MCF 10A (cell line): ENCODE measurements at regions of chr3 and their contacts with region 1.

Region 1: DNA sequence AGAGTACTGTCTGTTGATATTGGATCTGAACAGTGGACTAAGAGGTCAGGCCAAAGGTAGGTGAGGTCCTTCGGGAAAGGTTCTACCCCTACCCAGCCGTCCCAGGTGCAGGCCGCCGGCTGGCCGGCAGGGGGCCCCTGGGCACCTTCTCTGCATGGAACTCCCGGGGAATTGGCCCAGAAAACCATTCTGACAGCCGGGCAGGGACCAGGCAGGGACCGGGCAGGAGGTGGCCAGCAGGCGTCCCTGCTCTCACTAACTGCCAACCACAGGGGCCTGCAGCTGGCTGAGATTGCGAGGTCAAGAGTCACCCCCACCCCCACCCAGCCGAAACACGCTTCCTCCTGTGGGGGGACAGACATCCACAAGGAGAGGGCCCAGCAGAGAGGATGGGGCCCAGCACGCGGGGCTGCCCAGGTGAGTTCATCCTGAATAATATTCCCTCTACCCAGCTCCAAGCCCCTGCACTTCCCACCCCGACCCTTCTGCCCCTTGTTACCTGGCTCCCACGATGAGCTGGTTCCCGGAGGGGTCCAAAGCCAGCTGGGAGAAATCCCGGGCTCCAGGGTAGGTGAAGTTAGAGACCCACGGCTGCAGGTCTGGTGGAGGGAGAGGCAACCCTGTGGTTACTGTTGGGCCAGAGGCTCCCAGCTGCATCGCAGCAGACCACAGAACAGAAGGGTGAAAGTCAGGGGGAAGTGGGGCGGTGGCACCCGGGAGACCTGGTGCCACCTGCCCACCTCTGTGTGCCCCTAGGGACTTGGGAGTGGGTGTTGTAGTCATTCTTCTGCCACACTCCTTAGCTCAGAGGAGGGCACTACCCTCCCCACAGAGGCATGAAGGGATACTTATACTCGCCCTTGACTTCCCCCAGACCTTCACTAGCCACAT is 84.4 kb downstream of the SEMA5B start:
- DNase-seq: peak; percentile 80
- H3K4me3 Mint-ChIP-seq: no peak overlapping the region
- H3K27ac Mint-ChIP-seq: no peak overlapping the region
- H3K4me1 Mint-ChIP-seq: peaks cover 4% of the 10 kb centered on the region
- H3K27me3 Mint-ChIP-seq: no peaks in the 10 kb centered on the region
- CTCF ChIP-seq: peak; percentile 90

Region 2: DNA sequence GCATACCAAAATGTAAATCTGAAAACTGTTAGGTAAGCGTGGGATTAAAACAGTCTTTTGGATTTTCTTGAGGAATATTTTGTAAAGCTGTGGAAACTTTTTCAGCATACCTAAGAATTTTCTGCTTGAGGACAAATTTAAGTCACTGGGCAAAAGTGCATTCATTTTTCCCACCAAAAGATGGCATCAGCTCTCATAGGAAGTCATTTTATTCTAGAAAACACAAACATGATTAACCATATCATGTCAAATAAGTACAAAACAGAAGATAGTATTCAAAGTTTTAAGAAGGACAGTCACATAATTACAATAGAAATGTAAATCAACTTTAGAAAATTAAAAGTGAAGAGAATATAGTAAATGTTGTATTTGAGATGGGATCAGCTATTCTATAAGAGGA is 84.8 kb before region 1 on chr3:
- CTCF ChIA-PET with region 1: interaction called, 10 read pairs
- POLR2A ChIA-PET with region 1: no interaction called
- intact Hi-C with region 1: loop called (anchors 2 kb)
- DNase-seq: peak; percentile 37
- H3K4me3 Mint-ChIP-seq: no peak overlapping the region
- H3K27ac Mint-ChIP-seq: no peak overlapping the region
- H3K4me1 Mint-ChIP-seq: no peaks in the 10 kb centered on the region
- H3K27me3 Mint-ChIP-seq: no peaks in the 10 kb centered on the region
- CTCF ChIP-seq: peak; percentile 37

Region 3: GRCh38 chr3:122969585-122970453 is 26.6 kb after region 1 on chr3:
- CTCF ChIA-PET with region 1: interaction called, 12 read pairs
- POLR2A ChIA-PET with region 1: interaction called, 4 read pairs
- intact Hi-C with region 1: no loop called
- DNase-seq: peak; percentile 97
- H3K4me3 Mint-ChIP-seq: peak overlapping the region; percentile 36
- H3K27ac Mint-ChIP-seq: no peak overlapping the region
- H3K4me1 Mint-ChIP-seq: peaks cover 31% of the 10 kb centered on the region
- H3K27me3 Mint-ChIP-seq: no peaks in the 10 kb centered on the region
- CTCF ChIP-seq: no peak

Region 4: GRCh38 chr3:123028233-123028828 is 85.1 kb after region 1 on chr3:
- CTCF ChIA-PET with region 1: interaction called, 89 read pairs
- POLR2A ChIA-PET with region 1: interaction called, 8 read pairs
- intact Hi-C with region 1: loop called (anchors 1 kb)
- DNase-seq: peak; percentile 79
- H3K4me3 Mint-ChIP-seq: peak overlapping the region; percentile 52
- H3K27ac Mint-ChIP-seq: no peak overlapping the region
- H3K4me1 Mint-ChIP-seq: peaks cover 9% of the 10 kb centered on the region
- H3K27me3 Mint-ChIP-seq: peaks cover 50% of the 10 kb centered on the region
- CTCF ChIP-seq: peak; percentile 66

Region 5: GRCh38 chr3:123258811-123259420 is 315.7 kb after region 1 on chr3:
- CTCF ChIA-PET with region 1: interaction called, 7 read pairs
- POLR2A ChIA-PET with region 1: no interaction called
- intact Hi-C with region 1: loop called (anchors 5 kb)
- DNase-seq: peak; percentile 55
- H3K4me3 Mint-ChIP-seq: no peak overlapping the region
- H3K27ac Mint-ChIP-seq: no peak overlapping the region
- H3K4me1 Mint-ChIP-seq: no peaks in the 10 kb centered on the region
- H3K27me3 Mint-ChIP-seq: no peaks in the 10 kb centered on the region
- CTCF ChIP-seq: peak; percentile 51